ENCODE measurements at regions of chr15 and their contacts with region 1.

Region 1: DNA sequence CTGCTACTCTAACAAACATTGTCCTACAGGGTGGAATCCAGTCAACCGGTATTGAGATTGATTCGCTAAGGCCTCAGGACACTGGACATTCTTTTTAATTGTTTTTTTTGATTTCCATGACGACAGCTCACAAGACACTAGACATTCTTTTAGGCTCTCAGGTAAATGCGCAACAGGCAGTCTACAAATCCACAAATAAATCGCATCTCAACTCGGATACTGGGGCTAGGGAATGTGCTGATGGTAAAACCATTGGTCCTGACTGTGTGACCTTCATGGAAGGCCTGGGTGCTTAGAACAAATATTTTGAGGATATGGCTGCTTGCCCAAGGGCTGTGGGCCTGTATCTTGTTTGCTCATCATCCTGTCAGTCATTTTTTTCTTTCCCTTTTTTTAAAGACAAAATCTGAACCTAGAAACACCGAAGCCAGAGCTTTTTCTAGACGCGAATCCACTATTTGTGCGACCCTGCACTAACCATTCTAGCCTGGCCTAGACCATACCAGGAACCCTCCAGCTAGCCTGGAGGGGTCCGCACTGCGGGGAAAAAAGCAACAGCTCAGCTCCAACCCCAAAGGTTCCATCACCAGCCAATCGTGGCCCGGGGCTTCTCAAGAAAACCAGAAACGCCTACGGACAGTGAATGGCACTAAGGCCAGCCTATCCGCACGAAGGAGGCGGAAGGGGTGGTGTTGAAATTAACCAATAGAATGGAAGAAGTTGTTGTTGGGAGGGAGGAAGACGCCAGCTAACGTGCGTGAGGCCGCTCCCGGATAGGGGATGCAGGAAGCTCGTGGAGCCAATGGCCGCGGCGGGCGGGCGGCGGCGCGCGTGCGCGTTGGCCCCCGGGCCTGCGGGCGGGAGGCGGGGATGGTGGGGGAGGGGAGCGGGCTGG is 18.1 kb upstream of the CHD2 start:
- DNase-seq: peak; percentile 99
- ATAC-seq: peak; percentile 92
- H3K4me3 Mint-ChIP-seq: peak overlapping the region; percentile 83
- H3K27ac Mint-ChIP-seq: peak overlapping the region; percentile 98
- H3K4me1 Mint-ChIP-seq: peaks cover 46% of the 10 kb centered on the region
- H3K27me3 Mint-ChIP-seq: no peaks in the 10 kb centered on the region
- CTCF ChIP-seq: no peak

Region 2: DNA sequence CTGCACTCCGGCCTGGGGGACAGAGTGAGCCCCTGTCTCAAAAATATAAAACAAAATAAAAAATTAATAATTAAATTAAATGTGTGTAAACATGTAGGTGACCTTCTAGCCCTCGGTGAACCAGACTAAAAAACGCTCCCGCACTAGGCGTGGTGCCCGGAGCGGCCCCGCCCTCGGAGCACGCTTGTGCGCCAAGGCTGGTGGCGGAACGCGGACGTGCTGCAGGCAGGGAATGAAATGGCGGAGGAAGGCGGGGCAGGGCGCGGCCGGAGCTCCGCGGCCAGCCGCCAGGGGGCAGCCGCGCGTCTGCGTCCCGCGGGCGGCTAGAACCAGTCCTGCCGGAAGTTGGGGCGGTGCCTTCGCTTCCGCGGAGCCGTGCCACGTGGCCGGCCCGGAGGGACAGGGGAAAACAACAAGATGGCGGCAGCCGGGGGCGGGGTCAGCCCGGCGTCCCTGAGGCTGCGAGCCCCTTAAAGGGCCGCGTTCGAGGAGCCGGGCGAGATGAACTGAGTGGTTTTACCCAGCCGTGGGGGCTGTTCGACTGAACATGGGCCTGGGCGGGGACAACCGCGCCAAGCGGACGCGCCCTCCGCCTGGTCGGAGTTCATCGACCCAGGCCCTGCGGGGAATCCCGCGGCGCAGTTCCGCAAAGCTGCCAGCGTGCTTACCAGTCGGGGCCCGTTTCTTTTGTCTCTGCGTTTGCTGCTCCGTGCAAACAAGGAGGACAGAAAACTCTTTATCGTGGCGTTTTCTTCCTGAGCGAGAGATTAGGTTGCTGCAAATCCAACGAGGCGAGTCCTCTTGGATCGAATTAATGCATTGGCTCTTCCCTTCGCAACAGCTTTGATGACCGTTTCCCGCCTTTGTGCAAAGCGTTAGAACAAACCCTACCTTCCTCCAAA is 72.8 kb before region 1 on chr15:
- CTCF ChIA-PET with region 1: interaction called, 60 read pairs
- POLR2A ChIA-PET with region 1: interaction called, 226 read pairs
- intact Hi-C with region 1: loop called (anchors 1 kb)
- DNase-seq: peak; percentile 99
- ATAC-seq: peak; percentile 84
- H3K4me3 Mint-ChIP-seq: peak overlapping the region; percentile 82
- H3K27ac Mint-ChIP-seq: peak overlapping the region; percentile 99
- H3K4me1 Mint-ChIP-seq: peaks cover 40% of the 10 kb centered on the region
- H3K27me3 Mint-ChIP-seq: no peaks in the 10 kb centered on the region
- CTCF ChIP-seq: peak; percentile 92

Region 3: DNA sequence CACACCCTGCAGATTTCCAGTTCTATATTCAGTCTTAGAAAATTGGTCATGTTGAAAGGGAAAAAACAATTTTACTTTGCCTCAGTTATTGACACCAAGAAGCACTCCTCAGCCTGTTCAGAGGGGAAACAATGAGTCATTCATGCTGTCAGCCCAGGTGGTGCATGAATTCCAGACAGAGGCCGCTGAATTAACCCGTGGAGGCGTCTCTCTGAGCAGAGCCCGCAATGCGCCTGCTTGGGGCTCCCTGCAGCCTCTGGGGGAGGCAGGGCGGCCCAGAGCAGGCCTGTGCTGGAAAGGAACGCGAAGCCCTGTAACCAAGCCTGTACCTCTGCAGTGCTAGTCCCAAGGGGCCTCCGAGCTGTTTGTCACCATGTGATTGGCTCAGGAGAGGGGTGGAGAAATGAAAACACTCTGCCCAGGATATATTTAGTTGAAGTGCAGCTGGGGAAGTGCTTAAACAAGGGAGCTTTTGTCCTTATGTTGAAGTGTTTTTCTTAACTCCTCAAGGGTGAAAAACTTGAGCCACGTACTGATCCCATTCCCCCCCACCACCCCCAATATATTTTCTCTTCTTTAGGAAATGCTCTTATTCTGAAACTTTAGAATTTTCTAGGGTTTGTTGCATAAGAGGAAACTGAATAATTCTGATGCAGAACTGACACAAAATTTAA is 50.3 kb before region 1 on chr15:
- CTCF ChIA-PET with region 1: interaction called, 14 read pairs
- POLR2A ChIA-PET with region 1: interaction called, 116 read pairs
- intact Hi-C with region 1: loop called (anchors 5 kb)
- DNase-seq: peak; percentile 96
- ATAC-seq: peak; percentile 96
- H3K4me3 Mint-ChIP-seq: peak overlapping the region; percentile 66
- H3K27ac Mint-ChIP-seq: peak overlapping the region; percentile 95
- H3K4me1 Mint-ChIP-seq: peaks cover 43% of the 10 kb centered on the region
- H3K27me3 Mint-ChIP-seq: no peaks in the 10 kb centered on the region
- CTCF ChIP-seq: no peak

Region 4: DNA sequence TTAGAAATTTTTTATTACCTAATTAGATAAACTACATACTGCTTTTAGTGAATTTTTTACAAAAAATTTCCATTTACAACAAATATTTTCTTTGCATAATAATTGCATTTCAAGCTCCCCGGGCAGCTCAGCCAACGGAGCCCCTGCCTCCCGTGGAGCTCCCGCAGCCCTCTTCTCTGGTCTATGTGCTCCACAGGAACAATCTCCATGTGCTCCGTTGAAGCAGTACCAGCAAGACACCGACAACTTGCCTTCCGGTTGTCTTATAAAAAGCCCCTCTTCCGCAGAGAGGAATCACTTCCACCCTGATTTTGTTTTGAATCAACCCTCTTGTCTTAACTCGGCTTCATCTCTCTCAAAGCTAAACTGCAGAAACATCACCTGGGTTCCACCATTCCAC is 28.8 kb before region 1 on chr15:
- CTCF ChIA-PET with region 1: interaction called, 3 read pairs
- POLR2A ChIA-PET with region 1: interaction called, 19 read pairs
- intact Hi-C with region 1: loop called (anchors 5 kb)
- DNase-seq: no peak
- ATAC-seq: no peak
- H3K4me3 Mint-ChIP-seq: no peak overlapping the region
- H3K27ac Mint-ChIP-seq: no peak overlapping the region
- H3K4me1 Mint-ChIP-seq: peaks cover 20% of the 10 kb centered on the region
- H3K27me3 Mint-ChIP-seq: no peaks in the 10 kb centered on the region
- CTCF ChIP-seq: no peak

Region 5: DNA sequence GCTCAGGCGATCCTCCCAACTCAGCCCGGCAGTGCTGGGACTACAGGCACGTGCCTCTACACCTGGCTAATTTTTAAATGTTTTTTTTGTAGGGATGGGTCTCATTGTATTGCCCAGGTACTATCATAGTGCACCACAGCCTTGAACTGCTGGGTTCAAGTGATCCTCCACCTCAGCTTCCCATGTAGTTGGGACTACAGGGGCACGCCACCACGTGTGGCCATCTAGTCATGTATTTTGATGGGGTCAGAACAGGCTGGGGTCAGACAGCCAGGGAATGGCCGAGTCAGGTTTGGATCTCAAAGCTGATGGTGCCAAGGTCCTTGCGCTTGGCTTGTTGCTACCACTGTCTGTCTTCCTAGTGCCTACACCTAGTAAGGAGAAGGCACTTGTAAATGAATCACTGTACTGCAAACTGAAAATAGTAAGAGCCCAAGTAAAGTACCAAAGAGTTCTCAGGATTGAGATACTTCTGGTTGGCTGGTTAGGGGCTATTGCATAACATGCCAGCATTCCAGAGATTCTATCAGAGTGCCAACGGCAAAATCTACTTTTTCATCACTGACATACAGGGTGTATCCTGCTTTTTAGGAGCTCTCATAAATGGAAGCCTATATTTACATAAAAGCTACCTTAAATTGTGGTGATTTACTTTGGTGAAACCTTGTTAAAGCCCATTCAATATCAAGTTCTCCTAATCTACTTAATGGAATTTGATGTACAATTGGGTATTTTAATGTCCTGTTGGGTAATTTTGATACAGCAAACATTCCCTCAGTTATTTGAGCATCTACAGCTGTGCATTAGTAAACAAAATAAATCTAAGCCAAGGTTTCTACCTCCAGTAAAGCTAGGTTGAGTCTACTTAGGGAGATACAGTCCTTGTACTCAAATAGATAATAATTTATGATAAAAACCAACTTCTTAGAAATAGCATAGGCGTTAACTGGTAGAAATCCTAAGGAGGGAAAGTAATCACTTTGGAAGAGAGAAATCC is 12.8 kb before region 1 on chr15:
- CTCF ChIA-PET with region 1: interaction called, 11 read pairs
- POLR2A ChIA-PET with region 1: interaction called, 9 read pairs
- intact Hi-C with region 1: no loop called
- DNase-seq: no peak
- ATAC-seq: no peak
- H3K4me3 Mint-ChIP-seq: no peak overlapping the region
- H3K27ac Mint-ChIP-seq: no peak overlapping the region
- H3K4me1 Mint-ChIP-seq: peaks cover 2% of the 10 kb centered on the region
- H3K27me3 Mint-ChIP-seq: no peaks in the 10 kb centered on the region
- CTCF ChIP-seq: no peak

Region 6: GRCh38 chr15:92903941-92904831 is 22.1 kb after region 1 on chr15:
- CTCF ChIA-PET with region 1: interaction called, 64 read pairs
- POLR2A ChIA-PET with region 1: interaction called, 642 read pairs
- intact Hi-C with region 1: loop called (anchors 2 kb)
- DNase-seq: peak; percentile 99
- ATAC-seq: peak; percentile 81
- H3K4me3 Mint-ChIP-seq: peak overlapping the region; percentile 99
- H3K27ac Mint-ChIP-seq: peak overlapping the region; percentile 100
- H3K4me1 Mint-ChIP-seq: peaks cover 49% of the 10 kb centered on the region
- H3K27me3 Mint-ChIP-seq: no peaks in the 10 kb centered on the region
- CTCF ChIP-seq: no peak

Measured in activated CD8-positive, alpha-beta T cell treated with anti-CD3 and anti-CD28 coated beads for 36 hours (primary cell).